ENCODE measurements at regions of chr6 and their contacts with region 1.

Region 1: DNA sequence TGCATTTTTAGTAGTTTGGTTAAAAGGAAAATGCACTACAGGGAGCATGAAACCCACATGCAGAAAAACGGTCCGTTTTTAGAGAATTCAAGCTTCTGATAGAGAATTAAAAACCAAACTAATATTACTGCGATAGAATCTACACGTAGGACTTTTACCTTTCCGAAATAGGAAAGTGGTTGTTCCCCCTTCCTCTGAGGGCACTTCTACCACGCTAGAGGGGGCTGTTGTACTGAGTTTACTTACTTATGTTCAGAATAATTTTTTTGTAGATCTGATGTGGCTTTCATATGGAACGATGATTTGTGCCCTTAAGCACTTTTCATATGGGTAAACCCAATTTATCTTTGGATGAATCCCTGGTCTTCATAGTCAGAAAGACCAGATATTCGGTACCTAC is 264.3 kb upstream of the PLN start:
- DNase-seq: no peak

Region 2: DNA sequence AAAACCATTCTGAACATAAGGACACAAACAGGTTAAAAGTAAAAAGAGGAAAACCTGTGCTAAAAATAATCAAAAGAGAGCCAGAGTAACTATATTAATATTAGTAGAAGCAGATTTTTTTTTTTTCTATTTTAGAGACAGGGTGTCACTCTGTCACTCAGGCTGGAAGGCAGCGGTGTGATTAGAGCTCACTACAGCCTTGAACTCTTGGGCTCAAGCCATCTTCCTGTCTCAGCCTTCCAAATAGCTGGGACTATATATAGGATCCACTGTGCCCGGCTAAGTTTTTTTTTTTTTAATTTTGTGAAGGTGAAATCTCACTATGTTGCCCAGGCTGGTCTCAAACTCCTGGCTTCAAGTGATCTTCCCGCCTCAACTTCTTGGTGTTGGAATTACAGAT is 230.9 kb after region 1 on chr6:
- intact Hi-C with region 1: loop called (anchors 5 to 10 kb)
- DNase-seq: no peak

Region 3: DNA sequence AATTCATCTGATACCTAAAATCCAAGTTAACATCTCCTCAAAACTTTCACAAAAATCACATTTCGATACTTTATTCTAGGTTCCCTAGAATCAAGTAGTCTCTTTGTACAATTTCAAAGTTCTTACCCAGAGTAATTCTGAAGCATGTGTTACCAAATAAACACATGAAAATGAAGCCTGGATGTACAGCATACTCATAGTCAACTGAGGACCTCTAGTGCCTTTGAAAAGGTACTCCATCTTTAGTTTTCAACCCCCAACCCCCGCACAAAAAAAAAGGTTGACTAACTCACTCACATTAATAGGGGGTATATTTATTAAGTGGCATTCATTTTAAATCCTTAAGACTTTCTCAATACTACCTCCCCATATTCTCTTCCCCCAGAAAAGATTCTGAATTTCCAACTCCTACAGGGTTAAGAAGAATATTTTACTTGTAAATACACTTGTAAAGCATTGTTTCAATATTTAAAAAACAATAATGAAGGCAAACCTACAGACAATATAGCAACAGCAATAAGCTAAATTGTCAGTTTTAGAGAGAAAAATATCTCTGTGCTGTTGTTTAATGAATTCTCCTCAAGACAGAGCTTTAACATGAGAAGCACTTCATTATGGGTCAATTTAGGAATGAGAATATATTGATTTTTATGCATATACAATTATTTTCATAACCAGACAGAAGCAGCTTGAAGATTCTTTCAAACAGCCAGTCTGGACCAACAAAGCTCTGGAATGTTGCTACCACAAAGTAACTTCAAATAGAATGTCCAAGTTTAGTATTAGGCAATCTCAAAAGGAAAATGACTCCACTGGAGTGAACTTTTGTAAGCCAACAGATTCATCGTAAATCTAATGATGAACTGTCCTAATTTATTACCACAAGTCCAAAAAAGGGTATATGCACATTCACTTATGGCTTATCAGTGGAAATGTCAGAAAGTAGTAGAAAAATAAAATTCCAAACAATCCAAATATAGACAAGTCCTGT is 267.6 kb after region 1 on chr6:
- intact Hi-C with region 1: loop called in 1 of 2 experiments (anchors 10 kb)
- DNase-seq: no peak

Region 4: DNA sequence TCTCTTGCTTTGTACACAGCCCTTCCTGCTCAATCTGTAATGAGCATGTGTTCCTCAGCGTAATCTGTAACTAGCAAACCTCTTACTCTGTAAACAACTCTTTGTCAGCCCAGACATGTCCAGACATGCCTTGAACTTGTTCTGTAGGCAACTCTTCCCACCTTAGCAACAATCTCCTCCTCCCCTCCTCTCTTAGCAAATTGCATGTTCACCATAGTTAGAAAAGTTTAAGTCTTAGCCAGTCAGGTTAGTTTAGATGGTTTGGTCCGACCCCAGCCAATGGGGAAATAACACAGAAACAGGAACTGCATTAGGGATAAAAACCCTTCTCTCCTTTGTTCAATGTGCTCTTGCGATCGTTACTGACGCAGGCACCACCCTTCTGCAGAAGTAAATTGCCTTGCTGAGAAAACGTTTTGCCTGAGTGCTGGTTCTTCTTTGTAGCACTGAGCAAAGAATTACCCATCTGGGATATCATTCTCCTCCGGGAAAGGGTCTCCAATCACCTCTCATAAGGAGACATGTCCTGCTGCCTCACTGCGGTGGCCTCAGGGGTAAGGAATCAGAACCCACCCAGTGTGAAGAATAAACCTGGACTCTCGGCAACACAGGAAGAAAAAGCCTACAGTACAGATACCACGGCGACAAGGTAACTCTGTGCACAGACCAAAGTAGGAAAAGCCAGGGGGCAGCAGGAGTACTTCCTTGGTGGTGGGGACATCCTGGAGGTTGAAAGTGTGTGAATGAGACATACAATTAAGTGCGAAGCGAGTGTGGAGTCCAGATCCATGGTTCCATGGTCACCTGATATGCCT is 290.5 kb after region 1 on chr6:
- intact Hi-C with region 1: loop called in 1 of 2 experiments (anchors 10 kb)
- DNase-seq: no peak

Region 5: DNA sequence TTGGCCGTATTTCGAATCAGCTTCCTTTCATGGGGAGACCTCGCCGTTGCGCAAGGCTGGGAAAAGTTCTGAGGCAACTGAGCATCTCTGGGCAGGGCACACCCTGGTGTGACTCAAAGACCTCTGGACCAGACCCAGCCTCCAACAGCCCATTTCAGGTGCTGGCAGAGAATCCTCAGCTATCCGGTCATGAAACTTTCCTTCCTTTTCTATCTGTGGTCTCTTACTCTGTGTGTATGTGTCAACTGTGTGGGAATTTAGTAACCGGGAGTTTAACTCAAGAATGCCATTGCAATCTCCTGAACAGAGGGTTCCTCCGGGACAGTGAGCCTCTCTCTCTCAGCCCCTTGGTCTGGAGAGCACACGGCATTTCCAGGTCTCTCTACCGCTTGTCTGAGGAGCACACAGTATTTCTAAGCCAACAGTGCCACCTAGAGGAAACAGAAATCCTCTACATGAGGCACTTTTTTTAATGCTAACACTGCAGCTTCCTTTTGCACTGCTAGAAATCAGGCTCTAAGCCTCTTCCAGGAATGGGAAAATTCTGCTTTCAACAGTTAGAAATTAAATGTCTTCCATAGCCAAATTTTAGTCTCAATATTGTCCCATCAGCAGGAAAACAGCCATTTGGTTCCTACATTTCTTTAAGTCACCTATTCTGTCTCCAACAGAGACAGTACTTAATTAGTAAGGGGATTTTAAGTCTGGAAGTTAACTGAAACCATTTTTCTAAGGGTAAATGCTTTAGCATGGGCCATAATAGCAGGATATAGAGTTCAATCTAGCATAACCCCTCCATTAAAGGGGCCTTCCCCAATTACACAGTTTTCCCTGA is 297.0 kb after region 1 on chr6:
- intact Hi-C with region 1: loop called (anchors 5 to 10 kb)
- DNase-seq: no peak

Region 6: DNA sequence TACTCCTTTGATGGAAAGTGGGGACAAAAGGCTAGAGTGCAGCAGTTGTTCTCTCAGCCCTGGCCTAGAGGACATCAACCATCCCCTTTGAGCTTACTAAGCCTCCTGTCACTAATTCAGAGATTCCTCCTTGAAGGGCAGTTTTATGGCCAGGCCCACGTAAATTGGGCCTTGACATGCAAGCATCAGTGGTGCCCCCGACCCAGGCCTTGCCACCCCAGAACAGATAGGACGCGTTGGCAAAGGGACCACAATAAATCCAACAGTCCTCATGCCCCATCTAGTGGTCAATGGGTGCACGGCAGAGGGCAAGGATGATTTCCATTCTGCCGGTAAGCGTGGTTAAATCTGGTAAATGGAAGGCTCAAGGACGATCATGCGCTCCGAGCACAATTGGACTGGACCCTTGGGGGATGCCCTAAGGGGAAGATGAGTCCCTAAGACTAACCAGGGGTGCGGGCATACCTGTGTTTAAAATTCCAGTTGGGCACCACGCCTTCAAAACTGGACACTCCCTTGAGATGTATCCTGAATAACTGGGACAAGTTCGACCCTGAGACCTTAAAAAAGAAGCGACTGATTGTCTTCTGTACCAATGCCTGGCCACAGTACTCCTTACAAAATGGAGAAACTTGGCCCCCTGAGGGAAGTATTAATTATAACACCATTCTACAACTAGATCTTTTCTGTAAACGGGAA is 335.1 kb after region 1 on chr6:
- intact Hi-C with region 1: loop called in 1 of 2 experiments (anchors 5 kb)
- DNase-seq: no peak

Region 7: GRCh38 chr6:118776607-118777549 is 493.1 kb after region 1 on chr6:
- intact Hi-C with region 1: loop called in 1 of 2 experiments (anchors 10 kb)
- DNase-seq: no peak